B cell (primary cell): ENCODE measurements at regions of chr17 and their contacts with region 1.

Region 1: DNA sequence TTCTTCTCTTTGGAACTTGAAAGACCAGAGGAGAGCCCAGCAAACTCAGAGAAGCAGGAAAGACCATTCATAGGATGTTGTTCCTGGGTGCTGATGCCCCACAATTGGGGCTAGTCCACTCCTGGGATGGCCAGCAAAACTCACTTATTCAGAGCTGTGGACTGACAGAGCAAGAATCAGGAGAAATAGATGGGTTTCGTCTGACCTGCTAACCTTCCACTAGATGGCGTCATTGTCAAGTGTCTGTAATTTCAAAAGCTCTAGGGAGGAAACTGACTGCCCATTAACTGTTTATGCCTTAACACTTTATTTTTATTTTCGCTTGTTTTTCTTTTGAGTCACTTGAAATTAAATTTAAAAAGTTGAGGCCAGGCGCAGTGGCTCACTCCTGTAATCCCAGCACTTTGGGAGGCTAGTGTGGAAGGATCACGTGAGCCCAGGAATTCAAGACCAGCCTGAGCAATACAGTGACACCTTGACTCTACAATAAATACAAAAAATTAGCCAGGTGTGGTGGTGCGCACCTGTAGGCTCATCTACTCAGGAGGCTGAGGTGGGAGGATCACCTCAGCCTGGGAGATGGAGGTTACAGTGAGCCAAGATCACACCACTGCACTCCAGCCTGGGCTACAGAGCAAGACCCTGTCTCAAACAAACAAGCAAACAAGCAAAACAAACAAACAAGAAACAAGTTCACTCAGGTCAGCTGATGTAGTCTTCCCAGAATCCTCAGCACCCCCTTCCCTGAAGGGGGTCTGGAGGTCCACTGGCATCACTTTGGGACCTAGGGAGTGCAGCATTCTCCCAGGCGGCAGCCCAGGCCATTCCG is 28.6 kb upstream of the MILR1 start:
- DNase-seq: peak; percentile 84
- ATAC-seq: peak; percentile 82
- H3K4me3 ChIP-seq: no peak overlapping the region
- H3K4me3 Mint-ChIP-seq: no peak overlapping the region
- H3K27ac ChIP-seq: no peak overlapping the region
- H3K27ac Mint-ChIP-seq: no peak overlapping the region
- H3K4me1 ChIP-seq: peaks cover 3 to 8% of the 10 kb centered on the region in 2 donors
- H3K4me1 Mint-ChIP-seq: peaks cover 5% of the 10 kb centered on the region
- H3K27me3 ChIP-seq: no peaks in the 10 kb centered on the region
- H3K27me3 Mint-ChIP-seq: no peaks in the 10 kb centered on the region
- CTCF ChIP-seq: peak; percentile 81

Region 2: DNA sequence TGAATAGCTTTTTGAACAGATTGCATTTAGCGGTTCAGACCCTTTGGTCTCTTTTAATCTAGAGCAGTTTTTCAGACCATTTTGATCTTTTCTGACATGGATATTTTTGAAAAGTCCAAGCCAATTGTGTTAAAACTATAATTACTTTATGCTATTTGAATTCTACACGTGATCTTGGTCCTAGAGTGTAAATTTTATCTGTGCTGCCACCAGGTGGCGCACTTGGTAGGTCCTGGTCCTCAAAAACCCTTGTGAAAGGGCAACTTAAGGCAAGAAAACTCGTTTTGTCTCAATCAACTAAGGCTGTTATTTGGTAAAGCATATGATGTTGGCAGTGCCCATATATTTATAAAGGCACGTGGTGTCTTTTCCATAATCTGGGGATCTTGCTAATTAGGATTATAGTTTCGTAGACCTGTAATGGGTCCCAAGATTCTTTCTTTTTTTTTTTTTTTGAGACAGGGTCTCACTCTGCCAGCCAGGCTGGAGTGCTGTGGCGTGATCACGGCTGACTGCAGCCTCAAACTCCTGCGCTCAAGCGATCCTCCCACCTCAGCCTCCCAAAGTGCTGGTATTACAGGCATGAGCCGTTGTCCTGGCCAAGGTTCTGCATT is 113.4 kb before region 1 on chr17:
- CTCF ChIA-PET with region 1: interaction called, 316 read pairs
- POLR2A ChIA-PET with region 1: no interaction called
- intact Hi-C with region 1: loop called (anchors 1 kb)
- DNase-seq: peak; percentile 83
- ATAC-seq: peak; percentile 57
- H3K4me3 ChIP-seq: no peak overlapping the region
- H3K4me3 Mint-ChIP-seq: no peak overlapping the region
- H3K27ac ChIP-seq: no peak overlapping the region
- H3K27ac Mint-ChIP-seq: no peak overlapping the region
- H3K4me1 ChIP-seq: no peaks in the 10 kb centered on the region
- H3K4me1 Mint-ChIP-seq: no peaks in the 10 kb centered on the region
- H3K27me3 ChIP-seq: no peaks in the 10 kb centered on the region
- H3K27me3 Mint-ChIP-seq: no peaks in the 10 kb centered on the region
- CTCF ChIP-seq: peak; percentile 95

Region 3: DNA sequence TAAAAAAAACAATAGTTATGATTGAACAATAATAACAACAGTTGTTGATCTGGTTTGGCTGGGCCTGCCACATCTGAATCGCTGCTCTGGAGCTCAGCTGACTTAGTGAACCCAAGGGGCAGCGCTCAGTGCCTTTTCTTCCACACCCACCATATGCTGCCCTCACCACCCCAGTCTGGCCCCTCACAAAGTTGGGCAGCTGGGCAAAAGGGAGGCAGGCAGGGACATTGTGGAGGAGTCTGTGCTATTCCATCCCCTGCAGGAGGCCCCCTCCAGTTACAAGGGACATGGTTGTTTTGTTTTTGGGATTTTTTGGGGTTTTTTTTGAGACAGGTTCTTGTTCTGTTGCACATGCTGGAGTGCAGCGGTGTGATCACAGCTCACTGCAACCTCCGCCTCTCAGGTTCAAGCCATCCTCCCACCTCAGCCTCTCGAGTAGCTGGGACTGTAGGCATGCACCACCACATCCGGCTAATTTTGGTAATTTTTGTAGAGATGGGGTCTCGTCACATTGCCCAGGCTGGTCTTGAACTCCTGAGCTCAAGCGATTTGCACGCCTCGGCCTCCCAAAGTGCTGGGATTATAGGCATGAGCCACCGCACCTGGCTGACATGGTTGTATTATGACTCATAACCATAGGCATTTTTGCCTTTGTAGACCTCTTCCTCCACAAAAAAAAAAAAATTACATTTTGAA is 21.1 kb before region 1 on chr17:
- CTCF ChIA-PET with region 1: interaction called, 94 read pairs
- POLR2A ChIA-PET with region 1: interaction called, 4 read pairs
- intact Hi-C with region 1: no loop called
- DNase-seq: no peak
- ATAC-seq: no peak
- H3K4me3 ChIP-seq: no peak overlapping the region
- H3K4me3 Mint-ChIP-seq: no peak overlapping the region
- H3K27ac ChIP-seq: no peak overlapping the region
- H3K27ac Mint-ChIP-seq: peak overlapping the region; percentile 15
- H3K4me1 ChIP-seq: peaks cover 69 to 73% of the 10 kb centered on the region in 2 donors
- H3K4me1 Mint-ChIP-seq: peaks cover 64% of the 10 kb centered on the region
- H3K27me3 ChIP-seq: no peaks in the 10 kb centered on the region
- H3K27me3 Mint-ChIP-seq: no peaks in the 10 kb centered on the region
- CTCF ChIP-seq: no peak

Region 4: GRCh38 chr17:64455993-64456885 is 35.9 kb after region 1 on chr17:
- CTCF ChIA-PET with region 1: interaction called, 31 read pairs
- POLR2A ChIA-PET with region 1: no interaction called
- intact Hi-C with region 1: no loop called
- DNase-seq: peak; percentile 72
- ATAC-seq: peak; percentile 82
- H3K4me3 ChIP-seq: peak overlapping the region in 3 of 5 experiments; percentile 3 to 34 (median 18)
- H3K4me3 Mint-ChIP-seq: peak overlapping the region; percentile 70
- H3K27ac ChIP-seq: peak overlapping the region; percentile 68 to 81
- H3K27ac Mint-ChIP-seq: peak overlapping the region; percentile 83
- H3K4me1 ChIP-seq: peaks cover 44 to 58% of the 10 kb centered on the region in 2 donors
- H3K4me1 Mint-ChIP-seq: peaks cover 54% of the 10 kb centered on the region
- H3K27me3 ChIP-seq: no peaks in the 10 kb centered on the region
- H3K27me3 Mint-ChIP-seq: no peaks in the 10 kb centered on the region
- CTCF ChIP-seq: no peak

Region 5: GRCh38 chr17:64515419-64515818 is 95.1 kb after region 1 on chr17:
- CTCF ChIA-PET with region 1: interaction called, 34 read pairs
- POLR2A ChIA-PET with region 1: no interaction called
- intact Hi-C with region 1: no loop called
- DNase-seq: peak; percentile 44
- ATAC-seq: peak; percentile 81
- H3K4me3 ChIP-seq: no peak overlapping the region
- H3K4me3 Mint-ChIP-seq: no peak overlapping the region
- H3K27ac ChIP-seq: no peak overlapping the region
- H3K27ac Mint-ChIP-seq: no peak overlapping the region
- H3K4me1 ChIP-seq: peaks cover 0 to 8% of the 10 kb centered on the region in 2 donors
- H3K4me1 Mint-ChIP-seq: peaks cover 15% of the 10 kb centered on the region
- H3K27me3 ChIP-seq: no peaks in the 10 kb centered on the region
- H3K27me3 Mint-ChIP-seq: no peaks in the 10 kb centered on the region
- CTCF ChIP-seq: no peak

Region 6: DNA sequence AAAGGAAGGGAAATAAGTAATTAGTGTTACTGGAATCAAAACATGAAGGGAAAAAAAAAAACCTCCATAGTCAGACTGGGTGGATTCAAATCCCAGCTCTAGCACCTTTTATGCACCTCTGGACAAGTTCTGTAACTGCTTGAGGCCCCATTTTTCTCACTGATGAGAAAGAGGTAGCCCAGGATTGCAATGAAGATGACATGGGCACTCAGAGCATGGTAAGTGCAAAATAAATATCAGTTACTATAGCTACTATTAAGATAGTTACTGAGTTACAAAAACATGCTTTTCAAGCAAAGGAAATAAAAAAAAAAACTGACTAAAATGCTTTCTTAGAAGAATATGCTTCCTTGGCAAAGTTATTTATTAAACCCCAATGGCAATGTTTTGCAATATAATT is 145.2 kb after region 1 on chr17:
- CTCF ChIA-PET with region 1: no interaction called
- POLR2A ChIA-PET with region 1: no interaction called
- intact Hi-C with region 1: no loop called
- DNase-seq: no peak
- ATAC-seq: no peak
- H3K4me3 ChIP-seq: no peak overlapping the region
- H3K4me3 Mint-ChIP-seq: no peak overlapping the region
- H3K27ac ChIP-seq: no peak overlapping the region
- H3K27ac Mint-ChIP-seq: no peak overlapping the region
- H3K4me1 ChIP-seq: no peaks in the 10 kb centered on the region
- H3K4me1 Mint-ChIP-seq: no peaks in the 10 kb centered on the region
- H3K27me3 ChIP-seq: no peaks in the 10 kb centered on the region
- H3K27me3 Mint-ChIP-seq: no peaks in the 10 kb centered on the region
- CTCF ChIP-seq: no peak

Region 7: GRCh38 chr17:64736804-64737492 is 316.6 kb after region 1 on chr17:
- CTCF ChIA-PET with region 1: interaction called, 15 read pairs
- POLR2A ChIA-PET with region 1: no interaction called
- intact Hi-C with region 1: no loop called
- DNase-seq: peak; percentile 23
- ATAC-seq: peak; percentile 47
- H3K4me3 ChIP-seq: no peak overlapping the region
- H3K4me3 Mint-ChIP-seq: no peak overlapping the region
- H3K27ac ChIP-seq: no peak overlapping the region
- H3K27ac Mint-ChIP-seq: no peak overlapping the region
- H3K4me1 ChIP-seq: peaks cover 0 to 5% of the 10 kb centered on the region in 2 donors
- H3K4me1 Mint-ChIP-seq: peaks cover 6% of the 10 kb centered on the region
- H3K27me3 ChIP-seq: no peaks in the 10 kb centered on the region
- H3K27me3 Mint-ChIP-seq: no peaks in the 10 kb centered on the region
- CTCF ChIP-seq: peak; percentile 31